ENCODE measurements at regions of chr12 and their contacts with region 1.

Region 1: DNA sequence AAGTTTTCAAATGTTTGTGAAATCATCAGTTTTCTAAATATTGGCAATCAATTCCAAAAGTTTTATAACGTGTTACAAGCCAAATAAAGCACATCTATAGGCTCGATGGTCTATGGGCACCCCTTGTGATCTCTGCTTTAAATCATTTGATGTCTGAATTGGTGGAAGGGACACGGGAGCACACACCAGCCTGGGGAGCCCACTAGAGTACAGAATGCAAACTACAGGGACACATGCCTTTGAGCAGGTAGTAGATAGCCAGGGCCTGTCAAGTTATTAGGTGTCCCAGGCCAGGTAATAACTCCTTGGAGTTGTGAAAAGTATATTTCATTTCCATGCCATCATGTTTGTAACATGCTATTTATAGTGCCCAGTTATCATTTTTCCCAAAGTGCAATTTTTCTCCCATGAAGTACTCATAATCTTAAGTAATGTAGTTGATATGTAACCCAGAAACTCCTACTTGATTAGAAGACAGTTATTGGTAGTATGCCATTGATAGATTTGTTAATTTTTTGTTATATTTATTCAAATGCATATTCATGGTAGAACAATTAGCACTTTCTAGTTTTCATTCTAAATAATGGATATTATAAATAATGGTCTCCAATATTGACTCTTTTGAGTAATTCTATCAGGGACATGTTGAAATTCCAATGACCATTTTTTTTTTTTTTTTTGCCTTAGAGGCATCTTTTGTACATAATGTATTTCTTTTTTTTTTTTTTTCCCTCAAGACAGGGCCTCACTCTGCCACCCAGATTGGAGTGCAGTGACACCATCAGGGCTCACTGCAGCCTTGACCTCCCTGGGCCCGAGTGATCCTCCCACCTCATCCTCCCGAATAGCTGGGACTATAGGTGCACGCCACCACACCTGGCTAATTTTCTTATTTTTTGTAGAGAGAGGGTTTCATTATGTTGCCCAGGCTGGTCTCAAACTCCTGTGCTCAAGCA is 96.9 kb upstream of the FGD4 start:
- DNase-seq: peak; percentile 17
- H3K4me3 ChIP-seq: no peak overlapping the region
- H3K27ac ChIP-seq: no peak overlapping the region
- H3K4me1 ChIP-seq: no peaks in the 10 kb centered on the region
- H3K27me3 ChIP-seq: no peaks in the 10 kb centered on the region
- CTCF ChIP-seq: peak in 2 of 5 experiments; percentile 26 to 39
- EP300 ChIP-seq: no peak
- POLR2A ChIP-seq: no peak

Region 2: GRCh38 chr12:31387466-31387865 is 915.0 kb before region 1 on chr12:
- in situ Hi-C with region 1: loop called in 1 of 4 experiments (anchors 25 kb)
- intact Hi-C with region 1: no loop called
- DNase-seq: no peak
- H3K4me3 ChIP-seq: no peak overlapping the region
- H3K27ac ChIP-seq: no peak overlapping the region
- H3K4me1 ChIP-seq: peaks cover 0 to 6% (median 0%) of the 10 kb centered on the region in 4 donors
- H3K27me3 ChIP-seq: no peaks in the 10 kb centered on the region
- CTCF ChIP-seq: no peak
- EP300 ChIP-seq: no peak
- POLR2A ChIP-seq: no peak

Region 3: GRCh38 chr12:31659087-31659933 is 643.2 kb before region 1 on chr12 and contains the start of gene ETFBKMT:
- in situ Hi-C with region 1: loop called (anchors 5 to 25 kb)
- intact Hi-C with region 1: loop called (anchors 10 kb)
- DNase-seq: peak; percentile 93
- H3K4me3 ChIP-seq: peak within 1 kb of the TSS; percentile 51 to 79 (median 68)
- H3K27ac ChIP-seq: peak within 1 kb of the TSS; percentile 90 to 96 (median 92)
- H3K4me1 ChIP-seq: peaks cover 3 to 11% (median 10%) of the 10 kb centered on the region in 4 donors
- H3K27me3 ChIP-seq: no peaks in the 10 kb centered on the region
- CTCF ChIP-seq: peak; percentile 36 to 78 (median 45)
- EP300 ChIP-seq: no peak
- POLR2A ChIP-seq: peak; percentile 67
- total RNA-seq, gene ETFBKMT: 0.40 to 3.8 (median 3.1) TPM

Region 4: DNA sequence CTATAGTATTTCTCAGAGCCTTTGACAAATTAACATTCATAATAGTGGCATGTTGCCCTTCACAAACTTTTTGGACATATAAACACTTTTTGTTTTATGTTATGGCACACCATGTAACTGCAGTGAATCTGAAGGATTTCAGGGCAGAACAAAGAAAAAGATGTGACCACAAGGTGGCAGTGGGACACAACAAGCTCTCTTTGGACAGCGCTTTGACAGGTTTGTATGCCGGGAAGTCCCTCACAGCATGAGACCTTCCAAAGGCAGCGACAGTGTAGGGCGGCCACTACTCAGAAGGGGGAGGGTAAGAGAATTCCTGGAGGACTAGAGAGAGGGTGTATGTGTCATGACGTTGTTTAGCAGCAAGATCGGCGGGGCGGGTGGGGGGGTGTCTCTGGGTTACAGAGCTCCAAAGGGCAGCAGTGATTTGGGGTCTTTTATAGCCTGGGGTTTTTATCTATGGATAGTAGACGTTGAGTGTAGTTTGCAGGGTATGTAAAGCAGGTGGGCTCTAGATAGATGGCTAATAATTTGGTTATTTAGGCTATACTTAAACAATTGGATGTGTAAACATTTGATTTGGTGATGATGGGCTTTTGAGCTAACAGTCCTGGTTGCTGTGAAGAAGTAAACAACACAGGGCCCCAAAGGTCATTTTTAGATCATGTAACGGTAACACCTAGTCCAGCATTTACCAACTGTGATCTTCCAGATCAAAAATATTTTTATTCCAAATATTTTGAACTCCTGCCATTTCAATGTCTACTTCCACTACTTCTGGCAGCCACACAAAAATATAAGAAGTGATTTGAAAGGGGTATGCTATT is 620.1 kb before region 1 on chr12:
- in situ Hi-C with region 1: loop called in 2 of 4 experiments (anchors 5 to 10 kb)
- intact Hi-C with region 1: no loop called
- DNase-seq: peak; percentile 70
- H3K4me3 ChIP-seq: no peak overlapping the region
- H3K27ac ChIP-seq: no peak overlapping the region
- H3K4me1 ChIP-seq: no peaks in the 10 kb centered on the region
- H3K27me3 ChIP-seq: no peaks in the 10 kb centered on the region
- CTCF ChIP-seq: peak; percentile 51 to 76 (median 62)
- EP300 ChIP-seq: no peak
- POLR2A ChIP-seq: no peak

Region 5: DNA sequence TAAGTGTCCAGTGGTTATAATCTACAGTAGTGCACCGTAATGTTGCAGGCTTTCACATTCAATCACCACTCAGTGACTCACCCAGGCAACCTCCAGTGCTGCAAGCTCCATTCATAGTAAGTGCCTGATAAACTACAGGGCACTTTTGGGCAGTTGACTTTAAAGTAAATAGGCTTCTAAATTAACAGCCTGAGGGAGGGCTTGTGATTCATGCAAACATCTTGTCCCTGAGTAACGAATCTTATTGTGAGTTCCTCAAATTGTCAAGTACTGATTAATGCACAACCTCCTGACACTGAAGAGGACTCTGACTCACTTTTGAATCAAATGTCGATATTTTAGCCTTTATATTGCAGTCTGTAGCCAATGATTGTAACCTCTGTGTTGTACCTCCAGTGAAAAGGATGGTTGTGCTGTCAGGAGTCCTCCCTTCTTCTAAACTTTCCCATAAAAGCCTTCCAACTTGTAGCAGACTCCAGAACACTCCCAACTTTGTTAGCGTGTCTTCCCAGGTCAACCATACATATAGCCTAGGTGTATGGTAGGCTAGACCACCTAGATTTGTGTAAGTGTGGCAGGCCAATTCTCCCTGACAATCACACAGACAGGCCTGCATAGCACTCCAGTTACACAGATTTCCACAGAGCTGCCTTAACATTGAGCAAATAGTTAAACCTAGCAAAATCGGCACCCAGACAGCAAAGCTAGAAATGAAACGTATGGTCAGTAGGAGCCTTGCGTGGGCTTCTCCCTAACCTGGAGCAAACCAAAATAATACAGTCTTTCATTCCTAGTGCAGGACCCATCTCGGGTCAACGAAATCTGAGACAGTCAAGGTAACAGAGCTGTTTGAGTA is 250.7 kb before region 1 on chr12:
- in situ Hi-C with region 1: loop called in 2 of 4 experiments (anchors 25 kb)
- intact Hi-C with region 1: no loop called
- DNase-seq: no peak
- H3K4me3 ChIP-seq: no peak overlapping the region
- H3K27ac ChIP-seq: no peak overlapping the region
- H3K4me1 ChIP-seq: no peaks in the 10 kb centered on the region
- H3K27me3 ChIP-seq: no peaks in the 10 kb centered on the region
- CTCF ChIP-seq: no peak
- EP300 ChIP-seq: no peak
- POLR2A ChIP-seq: no peak

Region 6: GRCh38 chr12:32062881-32063280 is 239.6 kb before region 1 on chr12:
- in situ Hi-C with region 1: loop called (anchors 5 to 25 kb)
- intact Hi-C with region 1: no loop called
- DNase-seq: no peak
- H3K4me3 ChIP-seq: no peak overlapping the region
- H3K27ac ChIP-seq: no peak overlapping the region
- H3K4me1 ChIP-seq: no peaks in the 10 kb centered on the region
- H3K27me3 ChIP-seq: no peaks in the 10 kb centered on the region
- CTCF ChIP-seq: no peak
- EP300 ChIP-seq: no peak
- POLR2A ChIP-seq: no peak

Region 7: DNA sequence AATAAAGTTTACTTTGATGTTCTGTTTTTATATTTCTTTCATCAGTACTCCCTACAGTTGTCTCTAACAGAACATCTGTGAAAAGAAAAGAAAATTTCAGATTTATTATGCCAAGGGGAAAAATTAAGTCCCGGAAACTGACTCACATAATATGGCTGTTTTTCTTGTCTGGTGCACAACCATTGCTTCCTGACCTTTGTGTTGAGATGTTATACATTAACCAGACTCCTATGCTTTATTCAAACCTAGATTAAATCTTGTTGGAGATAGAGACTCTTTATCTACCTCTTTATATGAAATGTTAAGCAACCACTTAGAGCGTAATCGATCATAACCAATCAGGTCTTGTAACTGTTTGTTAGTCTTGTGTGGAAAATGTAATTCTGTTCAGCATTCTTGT is 233.4 kb before region 1 on chr12:
- in situ Hi-C with region 1: loop called (anchors 5 to 25 kb)
- intact Hi-C with region 1: no loop called
- DNase-seq: no peak
- H3K4me3 ChIP-seq: no peak overlapping the region
- H3K27ac ChIP-seq: peak overlapping the region in 2 of 4 donors; percentile 23 to 35
- H3K4me1 ChIP-seq: peaks cover 0 to 23% (median 8%) of the 10 kb centered on the region in 4 donors
- H3K27me3 ChIP-seq: no peaks in the 10 kb centered on the region
- CTCF ChIP-seq: no peak
- EP300 ChIP-seq: no peak
- POLR2A ChIP-seq: no peak

Region 8: GRCh38 chr12:32226768-32227167 is 75.7 kb before region 1 on chr12:
- in situ Hi-C with region 1: no loop called
- intact Hi-C with region 1: no loop called
- DNase-seq: no peak
- H3K4me3 ChIP-seq: no peak overlapping the region
- H3K27ac ChIP-seq: no peak overlapping the region
- H3K4me1 ChIP-seq: no peaks in the 10 kb centered on the region
- H3K27me3 ChIP-seq: no peaks in the 10 kb centered on the region
- CTCF ChIP-seq: no peak
- EP300 ChIP-seq: no peak
- POLR2A ChIP-seq: no peak

Measured in transverse colon (tissue), 4 donors.